ENCODE measurements at regions of chr3 and their contacts with region 1.

Region 1: DNA sequence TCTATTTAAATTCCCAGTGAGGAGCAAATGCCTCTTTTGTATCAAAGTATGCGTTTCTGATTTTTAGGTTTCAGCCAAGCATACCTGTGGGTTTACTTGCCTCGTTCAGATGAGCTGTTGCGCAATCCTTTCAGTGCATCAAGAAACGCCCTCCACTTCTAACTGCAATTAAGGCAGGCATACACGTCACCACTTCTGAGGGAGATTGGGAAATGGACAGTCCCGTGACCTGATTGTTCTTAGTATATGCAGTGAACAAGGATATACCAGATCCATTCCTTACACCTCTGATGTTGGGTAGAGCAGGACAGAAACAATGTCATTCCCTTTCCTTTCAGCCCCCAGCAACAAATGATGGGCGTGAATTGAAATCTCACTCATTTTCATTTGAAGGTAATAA is 219.0 kb downstream of the ITPR1 start:
- DNase-seq: no peak
- H3K4me3 ChIP-seq: no peak overlapping the region
- H3K27ac ChIP-seq: no peak overlapping the region
- H3K4me1 ChIP-seq: peaks cover 11 to 23% of the 10 kb centered on the region in 2 experiments; a peak in 2 of 4 replicates
- H3K27me3 ChIP-seq: no peaks in the 10 kb centered on the region
- CTCF ChIP-seq: no peak
- EP300 ChIP-seq: no peak
- RAD21 ChIP-seq: no peak

Region 2: DNA sequence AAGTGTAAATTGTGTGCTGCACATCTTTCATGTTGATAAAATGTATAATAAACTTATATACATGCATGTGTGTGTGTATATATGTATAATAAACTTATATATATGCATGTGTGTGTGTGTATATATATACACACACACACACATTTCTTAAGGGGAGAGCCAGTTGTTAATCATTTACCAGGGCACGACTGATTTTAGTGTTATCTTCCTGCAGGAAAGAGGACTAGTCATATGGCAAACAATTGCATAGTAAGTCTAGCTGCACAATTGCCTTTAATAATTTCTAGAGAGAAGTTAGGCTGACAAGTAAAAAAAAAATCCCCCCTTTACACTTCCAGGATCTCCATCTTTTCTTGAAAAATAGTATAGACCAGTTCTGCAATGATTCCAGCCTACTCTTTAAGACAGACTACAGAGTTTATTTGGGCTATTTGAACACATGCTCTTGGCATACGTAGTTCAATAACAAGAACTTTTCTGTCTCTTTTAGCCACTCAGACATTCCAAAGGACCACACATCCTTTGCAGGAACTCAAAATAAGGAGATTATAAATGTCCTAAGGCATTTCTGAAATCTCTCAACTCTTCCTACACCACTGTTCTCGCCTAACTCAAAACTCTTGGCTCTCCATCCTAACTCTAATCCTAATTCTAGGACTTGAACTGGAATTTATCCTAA is 572.5 kb before region 1 on chr3:
- CTCF ChIA-PET with region 1: no interaction called
- POLR2A ChIA-PET with region 1: no interaction called
- DNase-seq: no peak
- H3K4me3 ChIP-seq: no peak overlapping the region
- H3K27ac ChIP-seq: no peak overlapping the region
- H3K4me1 ChIP-seq: no peaks in the 10 kb centered on the region
- H3K27me3 ChIP-seq: no peaks in the 10 kb centered on the region
- CTCF ChIP-seq: no peak
- EP300 ChIP-seq: no peak
- RAD21 ChIP-seq: no peak

Region 3: GRCh38 chr3:4656059-4656458 is 56.1 kb before region 1 on chr3:
- CTCF ChIA-PET with region 1: interaction called, 21 read pairs
- POLR2A ChIA-PET with region 1: no interaction called
- DNase-seq: peak; percentile 69
- H3K4me3 ChIP-seq: no peak overlapping the region; a peak in 1 of 4 replicates
- H3K27ac ChIP-seq: no peak overlapping the region
- H3K4me1 ChIP-seq: peaks cover 0 to 4% of the 10 kb centered on the region in 2 experiments; a peak in 1 of 4 replicates
- H3K27me3 ChIP-seq: no peaks in the 10 kb centered on the region
- CTCF ChIP-seq: peak; percentile 84
- EP300 ChIP-seq: no peak
- RAD21 ChIP-seq: peak; percentile 93

Region 4: DNA sequence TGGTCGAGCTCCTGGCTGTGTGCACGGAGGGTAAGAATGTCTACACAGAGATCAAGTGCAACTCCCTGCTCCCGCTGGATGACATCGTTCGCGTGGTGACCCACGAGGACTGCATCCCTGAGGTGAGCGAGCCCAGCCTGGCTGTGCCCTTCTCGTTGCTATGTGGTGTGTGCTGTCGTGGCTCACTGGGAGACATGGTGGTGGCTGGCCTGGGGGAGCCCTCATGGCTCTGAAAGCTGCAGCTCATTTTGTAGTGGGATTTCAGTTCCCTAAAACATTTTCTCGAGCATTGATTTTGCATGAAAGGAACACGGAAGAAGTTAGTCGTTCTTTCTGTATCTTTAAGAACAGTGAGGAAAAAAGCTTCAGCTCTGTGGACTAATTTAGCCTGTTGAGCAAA is 18.5 kb before region 1 on chr3:
- CTCF ChIA-PET with region 1: interaction called, 23 read pairs
- POLR2A ChIA-PET with region 1: no interaction called
- DNase-seq: no peak
- H3K4me3 ChIP-seq: no peak overlapping the region
- H3K27ac ChIP-seq: no peak overlapping the region
- H3K4me1 ChIP-seq: no peaks in the 10 kb centered on the region
- H3K27me3 ChIP-seq: no peaks in the 10 kb centered on the region
- CTCF ChIP-seq: no peak
- EP300 ChIP-seq: no peak
- RAD21 ChIP-seq: no peak

Region 5: DNA sequence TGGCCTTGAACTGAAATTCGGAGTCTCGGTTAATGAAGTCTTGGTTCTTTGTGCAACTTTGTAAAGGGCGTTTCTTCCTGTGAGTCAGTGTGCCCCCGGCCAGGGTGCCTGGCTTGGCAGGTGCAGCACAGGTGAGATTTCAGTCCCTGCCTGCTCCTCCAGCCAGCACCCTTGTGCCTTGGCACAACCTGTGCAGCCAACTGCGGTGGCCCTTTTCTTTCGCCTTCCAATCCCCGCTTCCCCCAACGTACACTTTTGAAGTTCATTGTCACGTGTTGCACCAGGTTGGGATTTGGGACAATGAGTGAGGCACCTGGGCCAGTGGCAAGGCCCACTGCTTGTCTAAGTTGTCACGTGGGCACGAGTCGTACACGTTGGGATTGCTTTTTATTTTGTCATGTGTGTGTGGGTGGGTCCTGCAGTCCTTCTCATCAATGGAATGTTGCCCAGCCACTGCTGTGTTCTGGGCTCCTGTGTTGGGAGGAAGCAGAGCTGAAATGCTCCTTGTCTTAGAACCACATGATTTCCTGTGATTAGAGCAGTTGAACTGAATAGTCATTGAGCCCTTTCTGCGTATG is 24.2 kb after region 1 on chr3:
- CTCF ChIA-PET with region 1: interaction called, 11 read pairs
- POLR2A ChIA-PET with region 1: no interaction called
- DNase-seq: no peak
- H3K4me3 ChIP-seq: no peak overlapping the region
- H3K27ac ChIP-seq: no peak overlapping the region
- H3K4me1 ChIP-seq: peaks cover 3 to 6% of the 10 kb centered on the region in 2 experiments; a peak in 2 of 4 replicates
- H3K27me3 ChIP-seq: no peaks in the 10 kb centered on the region
- CTCF ChIP-seq: no peak
- EP300 ChIP-seq: no peak
- RAD21 ChIP-seq: no peak

Region 6: GRCh38 chr3:5026331-5027218 is 314.4 kb after region 1 on chr3:
- CTCF ChIA-PET with region 1: interaction called, 36 read pairs
- POLR2A ChIA-PET with region 1: interaction called, 3 read pairs
- DNase-seq: peak; percentile 91
- H3K4me3 ChIP-seq: peak overlapping the region; percentile 53 to 70
- H3K27ac ChIP-seq: peak overlapping the region; percentile 92 to 95
- H3K4me1 ChIP-seq: peaks cover 18 to 19% of the 10 kb centered on the region in 2 experiments; a peak in 2 of 4 replicates
- H3K27me3 ChIP-seq: no peaks in the 10 kb centered on the region
- CTCF ChIP-seq: peak; percentile 74
- EP300 ChIP-seq: peak in 1 of 2 experiments; percentile 46; a peak in 1 of 4 replicates
- RAD21 ChIP-seq: peak; percentile 91

Region 7: DNA sequence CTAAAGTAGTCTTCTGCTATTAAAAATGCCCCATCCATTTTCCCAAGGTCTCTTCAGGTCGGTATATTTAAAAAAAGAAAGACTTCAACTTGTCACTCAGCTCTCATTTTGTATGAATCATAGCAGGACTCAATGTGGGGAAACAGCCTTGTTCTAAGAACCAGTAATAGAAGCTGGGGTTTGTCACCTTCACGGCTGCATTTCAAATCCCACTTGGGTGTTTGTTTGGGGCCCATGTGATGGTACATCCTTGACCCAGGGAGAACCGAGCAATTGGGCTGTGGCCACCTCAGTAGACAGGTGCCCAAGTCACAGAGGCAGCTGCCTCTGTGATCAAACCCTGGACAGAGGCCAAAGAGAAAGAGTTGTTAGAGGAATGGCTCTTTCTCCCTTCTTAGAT is 339.6 kb after region 1 on chr3:
- CTCF ChIA-PET with region 1: interaction called, 213 read pairs
- POLR2A ChIA-PET with region 1: no interaction called
- DNase-seq: no peak
- H3K4me3 ChIP-seq: no peak overlapping the region
- H3K27ac ChIP-seq: no peak overlapping the region
- H3K4me1 ChIP-seq: 0 out of 4 replicates have a peak, but pooled peaks cover 0 to 4% of the 10 kb centered on the region in 2 experiments
- H3K27me3 ChIP-seq: no peaks in the 10 kb centered on the region
- CTCF ChIP-seq: no peak
- EP300 ChIP-seq: no peak
- RAD21 ChIP-seq: no peak

Measured in SK-N-SH (cell line).